Aorta (tissue), 5 donors: ENCODE measurements at regions of chr16 and their contacts with region 1.

Region 1: DNA sequence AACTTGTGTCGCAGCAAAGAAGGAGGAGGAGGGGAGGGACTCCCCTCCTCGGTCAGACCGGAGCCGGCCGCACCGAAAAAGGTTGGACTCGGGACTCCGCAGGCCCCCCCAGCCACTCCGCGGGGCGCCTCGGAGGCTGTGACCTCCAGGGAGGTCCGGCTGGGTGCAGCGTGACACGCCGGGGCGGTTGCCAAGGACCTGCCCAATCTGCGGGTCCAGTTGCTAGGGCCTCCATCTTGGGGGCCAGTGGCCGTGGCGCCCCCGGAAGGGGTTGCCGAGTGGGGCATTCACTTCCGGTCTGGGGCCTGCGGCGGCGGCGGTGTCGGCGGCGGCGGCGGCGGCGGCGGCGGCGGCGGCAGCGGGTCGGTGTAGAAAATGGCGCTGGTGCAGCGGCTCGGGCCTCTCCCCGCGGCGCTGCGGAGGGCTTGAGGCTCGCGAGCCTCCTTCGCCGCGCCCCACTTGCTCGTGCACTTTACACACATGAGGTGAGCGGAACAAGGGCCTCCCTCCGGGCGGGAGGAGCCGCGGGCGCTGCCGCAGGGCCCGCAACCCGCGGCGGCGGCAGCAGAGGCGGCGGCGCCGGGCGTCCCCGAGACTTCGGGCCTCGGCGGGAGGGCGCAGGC is at the start of gene TNRC6A:
- DNase-seq: peak; percentile 94 to 97
- ATAC-seq: peak; percentile 95
- H3K4me3 ChIP-seq: peak within 1 kb of the TSS; percentile 99 to 100
- H3K27ac ChIP-seq: peak within 1 kb of the TSS; percentile 85 to 99
- H3K4me1 ChIP-seq: peaks cover 2 to 8% of the 10 kb centered on the region in 2 donors
- H3K27me3 ChIP-seq: no peaks in the 10 kb centered on the region
- total RNA-seq, gene TNRC6A: 74.8 to 98.3 TPM

Region 2: GRCh38 chr16:24645739-24646645 is 83.5 kb before region 1 on chr16:
- intact Hi-C with region 1: loop called in 1 of 2 experiments (anchors 5 kb)
- DNase-seq: no peak
- ATAC-seq: peak; percentile 82
- H3K4me3 ChIP-seq: no peak overlapping the region
- H3K27ac ChIP-seq: no peak overlapping the region
- H3K4me1 ChIP-seq: no peaks in the 10 kb centered on the region
- H3K27me3 ChIP-seq: no peaks in the 10 kb centered on the region

Region 3: DNA sequence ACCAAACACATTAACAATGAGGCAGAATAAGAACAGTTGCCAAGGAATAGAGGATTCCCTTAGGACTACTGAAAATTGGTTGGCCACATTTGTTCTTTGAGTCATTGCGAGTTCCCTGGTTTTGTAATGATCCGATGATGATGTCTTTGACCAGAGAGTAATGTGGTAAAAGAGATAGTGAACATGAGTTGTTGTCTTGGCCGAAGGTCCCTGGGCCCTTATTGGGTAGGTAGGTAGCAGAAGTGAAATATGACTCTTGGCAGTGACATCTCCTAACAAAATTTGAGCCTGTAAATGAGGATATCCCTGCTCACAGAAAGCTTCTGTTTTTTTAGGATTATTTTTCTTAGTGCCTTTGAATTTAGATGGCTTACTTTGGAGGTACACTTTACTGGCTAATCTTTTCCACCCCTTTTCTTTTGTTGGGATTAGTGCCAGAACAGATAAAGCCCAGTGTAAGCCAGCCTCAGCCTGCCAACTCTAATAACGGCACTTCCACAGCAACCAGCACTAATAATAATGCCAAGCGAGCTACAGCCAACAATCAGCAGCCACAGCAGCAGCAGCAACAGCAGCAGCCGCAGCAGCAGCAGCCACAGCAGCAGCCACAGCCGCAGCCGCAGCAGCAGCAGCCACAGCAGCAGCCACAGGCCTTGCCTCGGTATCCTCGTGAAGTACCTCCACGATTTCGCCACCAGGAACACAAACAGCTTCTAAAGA is 47.2 kb after region 1 on chr16:
- intact Hi-C with region 1: loop called in 1 of 2 experiments (anchors 5 kb)
- DNase-seq: peak in 1 of 2 donors; percentile 55
- ATAC-seq: peak; percentile 78
- H3K4me3 ChIP-seq: no peak overlapping the region
- H3K27ac ChIP-seq: peak overlapping the region; percentile 39 to 77
- H3K4me1 ChIP-seq: peaks cover 2 to 26% of the 10 kb centered on the region in 2 donors
- H3K27me3 ChIP-seq: no peaks in the 10 kb centered on the region